ENCODE measurements at regions of chrX and their contacts with region 1.

Region 1: GRCh38 chrX:37677765-37678164 is 7.8 kb upstream of the XK start:
- DNase-seq: no peak
- H3K4me3 ChIP-seq: no peak overlapping the region
- H3K27ac ChIP-seq: no peak overlapping the region
- H3K4me1 ChIP-seq: no peaks in the 10 kb centered on the region
- H3K27me3 ChIP-seq: no peaks in the 10 kb centered on the region
- CTCF ChIP-seq: no peak

Region 2: DNA sequence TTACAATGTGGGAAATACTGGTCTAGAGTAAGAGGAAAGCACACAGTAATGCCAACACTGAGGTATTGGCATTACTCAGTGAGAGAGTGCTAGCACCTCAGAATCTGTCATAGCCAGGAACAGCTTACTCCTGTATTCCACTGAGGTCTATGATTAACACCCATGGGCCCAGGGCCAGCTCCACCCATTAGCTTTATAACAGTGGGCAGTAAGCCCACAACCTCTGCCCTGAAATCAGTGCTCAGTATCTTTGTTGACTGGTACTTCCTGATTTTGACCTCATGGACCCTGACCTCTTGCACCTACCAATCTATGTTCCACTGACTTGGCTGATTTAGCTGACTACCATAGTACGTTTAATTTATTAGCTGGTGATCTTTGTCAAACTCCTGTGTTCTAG is 50.2 kb before region 1 on chrX:
- CTCF ChIA-PET with region 1: no interaction called
- POLR2A ChIA-PET with region 1: no interaction called
- intact Hi-C with region 1: no loop called
- DNase-seq: no peak
- H3K4me3 ChIP-seq: no peak overlapping the region
- H3K27ac ChIP-seq: no peak overlapping the region
- H3K4me1 ChIP-seq: peaks cover 7% of the 10 kb centered on the region; the same call in 1 of the 2 replicates
- H3K27me3 ChIP-seq: no peaks in the 10 kb centered on the region
- CTCF ChIP-seq: no peak

Region 3: DNA sequence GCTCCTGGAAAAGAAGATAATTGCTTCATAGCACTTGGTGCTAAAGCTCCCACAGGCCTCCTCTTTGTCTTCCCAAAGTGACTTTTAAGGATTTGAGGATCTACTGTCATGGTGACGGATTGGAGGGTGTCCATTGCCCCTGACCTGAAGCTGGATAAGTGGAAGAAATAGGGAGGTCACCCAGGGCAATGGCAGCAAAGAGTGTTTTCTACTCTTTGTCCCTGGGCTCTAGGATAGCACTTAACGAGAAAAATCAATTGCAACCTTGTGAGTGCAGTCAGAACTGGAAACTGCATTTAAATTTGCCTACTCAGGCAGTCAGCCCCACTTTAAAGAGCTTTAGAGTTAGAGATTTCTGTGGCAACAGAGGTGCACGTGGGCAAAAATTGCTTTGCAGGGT is 35.9 kb before region 1 on chrX:
- CTCF ChIA-PET with region 1: no interaction called
- POLR2A ChIA-PET with region 1: no interaction called
- intact Hi-C with region 1: loop called (anchors 1 kb)
- DNase-seq: no peak
- H3K4me3 ChIP-seq: no peak overlapping the region
- H3K27ac ChIP-seq: no peak overlapping the region
- H3K4me1 ChIP-seq: peaks cover 27% of the 10 kb centered on the region
- H3K27me3 ChIP-seq: no peaks in the 10 kb centered on the region
- CTCF ChIP-seq: no peak

Measured in PC-9 (cell line).